Mammary epithelial cell (primary cell): ENCODE measurements at regions of chr6 and their contacts with region 1.

Region 1: DNA sequence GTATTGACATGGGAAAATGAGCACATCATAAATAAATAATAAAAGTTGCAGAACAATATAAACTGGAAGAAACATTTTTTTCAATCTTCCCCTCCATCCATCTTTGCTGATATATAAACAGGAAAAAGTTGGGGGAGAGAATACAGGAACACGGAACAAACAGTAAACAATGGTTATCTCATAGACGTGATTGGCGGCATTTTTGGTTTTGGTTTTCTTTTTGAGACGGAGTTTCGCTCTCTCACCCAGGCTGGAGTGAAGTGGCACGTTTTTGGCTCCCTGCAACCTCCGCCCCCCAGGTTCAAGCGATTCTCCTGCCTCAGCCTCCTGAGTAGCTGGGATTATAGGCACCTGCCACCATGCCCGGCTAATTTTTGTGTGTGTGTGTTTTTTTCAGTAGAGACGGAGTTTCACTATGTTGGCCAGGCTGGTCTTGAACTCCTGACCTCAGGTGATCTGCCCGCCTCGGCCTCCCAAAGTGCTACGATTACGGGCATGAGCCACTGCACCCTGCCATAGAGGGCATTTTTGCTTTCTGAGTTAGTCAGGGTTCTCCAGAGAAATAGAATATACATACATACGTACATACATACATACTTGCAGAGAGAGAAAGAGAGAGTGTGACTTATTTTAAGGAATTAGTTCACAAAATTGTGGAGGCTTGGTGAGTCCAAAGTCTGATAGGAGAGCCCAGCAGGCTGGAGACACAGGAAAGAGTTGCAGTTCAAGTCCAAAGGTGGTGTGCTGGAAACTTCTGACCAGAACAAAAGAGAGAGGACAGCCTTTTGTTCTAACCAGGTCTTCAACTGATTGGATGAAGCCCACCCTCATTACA is 22.6 kb downstream of the GNL1 start:
- DNase-seq: no peak
- H3K4me3 ChIP-seq: no peak overlapping the region
- H3K27ac ChIP-seq: no peak overlapping the region
- H3K4me1 ChIP-seq: no peaks in the 10 kb centered on the region
- H3K27me3 ChIP-seq: no peaks in the 10 kb centered on the region
- CTCF ChIP-seq: no peak

Region 2: DNA sequence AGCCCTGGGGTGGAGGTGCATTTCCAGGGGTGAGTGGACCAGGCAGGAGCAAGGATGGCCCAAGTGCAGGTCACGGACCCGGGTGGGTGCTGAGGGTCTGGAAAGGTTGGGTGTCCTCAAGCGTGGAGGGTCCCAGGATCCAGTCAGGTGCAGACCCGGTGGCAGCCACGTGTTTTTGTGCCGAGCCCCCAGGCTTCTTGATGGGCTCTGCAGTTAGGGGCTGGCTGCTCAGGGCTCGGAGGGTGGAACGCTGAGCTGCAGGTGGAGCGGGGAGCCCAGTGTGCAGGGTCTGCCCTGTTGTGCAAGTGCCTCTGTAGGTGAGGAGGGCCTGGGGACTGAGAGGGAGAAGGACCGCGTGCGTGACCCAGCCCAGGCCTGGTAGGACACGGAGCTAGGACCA is 115.2 kb before region 1 on chr6:
- CTCF ChIA-PET with region 1: no interaction called
- dilution Hi-C with region 1: no loop called
- in situ Hi-C with region 1: no loop called
- intact Hi-C with region 1: no loop called
- DNase-seq: no peak
- H3K4me3 ChIP-seq: no peak overlapping the region
- H3K27ac ChIP-seq: no peak overlapping the region
- H3K4me1 ChIP-seq: no peaks in the 10 kb centered on the region
- H3K27me3 ChIP-seq: no peaks in the 10 kb centered on the region
- CTCF ChIP-seq: no peak

Region 3: GRCh38 chr6:30489081-30490025 is 44.3 kb before region 1 on chr6 and contains the start of gene HLA-E:
- CTCF ChIA-PET with region 1: interaction called, 4 read pairs
- dilution Hi-C with region 1: no loop called
- in situ Hi-C with region 1: loop called in 1 of 2 experiments (anchors 5 kb)
- intact Hi-C with region 1: no loop called
- DNase-seq: peak; percentile 99
- H3K4me3 ChIP-seq: peak within 1 kb of the TSS; percentile 92 to 99 (median 93)
- H3K27ac ChIP-seq: peak within 1 kb of the TSS; percentile 93
- H3K4me1 ChIP-seq: peaks cover 12% of the 10 kb centered on the region
- H3K27me3 ChIP-seq: no peaks in the 10 kb centered on the region
- CTCF ChIP-seq: no peak
- total RNA-seq, gene HLA-E: 106 to 145 TPM

Region 4: DNA sequence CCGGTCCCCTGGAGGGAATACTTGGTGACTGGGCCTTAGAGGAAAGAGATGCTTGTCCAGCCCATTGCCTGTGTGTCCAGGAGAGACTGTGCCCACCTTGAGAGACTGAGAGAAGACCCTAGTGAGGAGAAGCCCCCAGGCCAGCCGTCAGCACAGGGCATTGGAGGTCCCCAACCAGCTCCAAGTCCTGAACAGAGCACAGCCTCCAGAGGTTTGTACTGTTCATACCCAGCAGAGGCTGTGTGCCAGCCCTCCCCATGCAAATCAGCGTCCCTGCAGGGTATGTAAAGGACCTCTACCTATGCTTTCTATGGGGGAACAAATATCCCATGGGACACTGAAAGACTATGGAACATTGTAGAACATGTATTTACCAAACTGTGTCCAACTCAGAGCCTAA is 36.0 kb before region 1 on chr6:
- CTCF ChIA-PET with region 1: interaction called, 5 read pairs
- dilution Hi-C with region 1: no loop called
- in situ Hi-C with region 1: loop called in 1 of 2 experiments (anchors 5 kb)
- intact Hi-C with region 1: loop called (anchors 1 kb)
- DNase-seq: no peak
- H3K4me3 ChIP-seq: no peak overlapping the region
- H3K27ac ChIP-seq: no peak overlapping the region
- H3K4me1 ChIP-seq: peaks cover 19% of the 10 kb centered on the region
- H3K27me3 ChIP-seq: no peaks in the 10 kb centered on the region
- CTCF ChIP-seq: no peak

Region 5: GRCh38 chr6:30515932-30516753 is 17.5 kb before region 1 on chr6:
- CTCF ChIA-PET with region 1: interaction called, 13 read pairs
- dilution Hi-C with region 1: no loop called
- in situ Hi-C with region 1: no loop called
- intact Hi-C with region 1: loop called (anchors 2 kb)
- DNase-seq: peak; percentile 91
- H3K4me3 ChIP-seq: peak overlapping the region; percentile 48 to 70 (median 48)
- H3K27ac ChIP-seq: peak overlapping the region; percentile 99
- H3K4me1 ChIP-seq: peaks cover 19% of the 10 kb centered on the region
- H3K27me3 ChIP-seq: no peaks in the 10 kb centered on the region
- CTCF ChIP-seq: no peak

Region 6: GRCh38 chr6:30616811-30617564 is 83.3 kb after region 1 on chr6 and contains the start of gene PPP1R10:
- CTCF ChIA-PET with region 1: no interaction called
- dilution Hi-C with region 1: no loop called
- in situ Hi-C with region 1: no loop called
- intact Hi-C with region 1: no loop called
- DNase-seq: peak; percentile 100
- H3K4me3 ChIP-seq: peak within 1 kb of the TSS; percentile 70 to 99 (median 90)
- H3K27ac ChIP-seq: peak within 1 kb of the TSS; percentile 99
- H3K4me1 ChIP-seq: peaks cover 27% of the 10 kb centered on the region
- H3K27me3 ChIP-seq: no peaks in the 10 kb centered on the region
- CTCF ChIP-seq: no peak
- total RNA-seq, gene PPP1R10: 60.7 to 124 TPM